Left ventricle myocardium superior (tissue), 1 donor: ENCODE measurements at regions of chr20 and their contacts with region 1.

Region 1: DNA sequence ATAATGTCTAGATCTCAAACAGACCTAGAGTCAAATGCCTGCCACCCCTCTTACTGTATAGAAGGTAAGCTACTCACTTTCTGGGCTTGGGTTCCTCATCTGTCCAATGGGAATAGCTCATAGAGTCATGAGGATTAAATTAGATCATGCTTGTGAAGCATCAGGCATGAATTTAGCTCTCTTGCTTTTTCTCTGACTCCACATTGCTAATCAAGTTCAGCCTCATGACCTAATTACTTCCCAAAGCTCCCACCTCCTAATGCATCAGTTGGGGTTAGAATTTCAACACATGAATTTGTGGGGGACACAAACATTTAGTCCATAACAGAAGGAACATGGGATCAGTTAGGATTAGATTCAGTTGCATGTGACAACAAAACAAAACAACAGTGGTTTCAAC is 4.6 kb upstream of the DDX27 start:
- DNase-seq: no peak
- ATAC-seq: no peak

Region 2: DNA sequence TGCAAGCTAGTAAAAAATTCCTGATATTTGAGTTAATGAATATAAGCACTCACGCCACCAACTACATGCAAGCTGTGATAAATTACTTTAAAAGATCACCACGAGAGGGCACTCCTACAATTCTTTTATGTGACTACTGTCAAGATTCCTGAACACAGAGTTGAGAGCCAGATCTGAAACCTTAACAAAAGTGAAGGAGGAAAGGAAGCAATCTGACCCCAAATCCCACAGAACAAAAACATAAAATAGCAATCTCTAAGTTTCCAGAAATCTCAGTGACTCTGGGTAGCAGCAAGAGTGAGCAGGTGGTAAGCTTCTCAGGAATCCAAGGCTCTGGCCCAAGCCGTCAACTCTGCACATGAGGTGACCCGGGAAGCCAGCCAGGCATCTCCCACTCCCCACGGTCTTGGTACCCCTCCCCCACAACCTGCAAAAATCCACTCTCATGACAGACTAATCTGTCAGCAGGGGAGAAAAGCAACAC is 81.5 kb before region 1 on chr20:
- intact Hi-C with region 1: loop called (anchors 2 kb)
- DNase-seq: no peak
- ATAC-seq: peak; percentile 76

Region 3: DNA sequence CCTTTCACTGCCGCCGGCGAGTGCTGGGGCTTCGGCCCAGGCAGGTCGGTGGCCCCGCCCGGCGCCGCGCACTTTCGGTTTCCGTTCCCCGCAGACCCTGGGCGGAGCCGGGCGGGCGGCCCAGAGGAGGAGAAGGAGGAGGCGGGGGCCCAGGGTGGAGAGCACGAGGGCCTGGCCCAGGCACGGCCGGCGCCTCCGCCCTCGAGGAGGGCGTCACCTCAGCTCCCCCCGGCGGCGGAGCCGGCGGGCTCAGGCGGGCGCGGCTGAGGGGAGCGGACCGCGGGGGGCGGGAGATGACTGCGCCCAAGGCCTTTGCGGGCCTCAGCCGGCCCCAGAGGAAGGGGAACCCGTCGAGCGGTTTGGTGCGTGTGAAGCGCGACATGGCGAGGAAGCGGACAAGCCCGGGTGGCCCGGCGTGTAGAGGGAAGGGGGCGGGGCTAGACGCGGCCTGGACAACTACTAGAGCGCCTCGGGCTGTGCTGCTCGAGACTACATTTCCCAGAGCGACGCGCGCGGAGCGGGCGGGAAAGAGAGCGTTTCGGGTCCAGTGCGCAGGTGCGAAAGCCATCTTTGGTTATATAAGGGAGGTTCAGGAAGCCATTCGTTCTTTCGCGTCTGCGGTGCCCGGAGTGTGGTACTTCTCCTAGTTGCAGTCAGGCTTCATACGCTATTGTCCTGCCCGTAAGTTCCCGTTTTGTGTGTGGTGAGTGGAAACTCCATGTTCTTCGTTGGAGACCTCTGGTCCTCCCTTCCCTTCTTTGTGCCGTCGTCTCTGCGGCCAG is 63.7 kb after region 1 on chr20 and contains the start of gene ZNFX1:
- intact Hi-C with region 1: no loop called
- DNase-seq: peak; percentile 99
- ATAC-seq: peak; percentile 95
- total RNA-seq, gene ZNFX1: 20.6 TPM